Sciatic nerve (tissue), 2 donors: ENCODE measurements at regions of chr13 and their contacts with region 1.

Region 1: DNA sequence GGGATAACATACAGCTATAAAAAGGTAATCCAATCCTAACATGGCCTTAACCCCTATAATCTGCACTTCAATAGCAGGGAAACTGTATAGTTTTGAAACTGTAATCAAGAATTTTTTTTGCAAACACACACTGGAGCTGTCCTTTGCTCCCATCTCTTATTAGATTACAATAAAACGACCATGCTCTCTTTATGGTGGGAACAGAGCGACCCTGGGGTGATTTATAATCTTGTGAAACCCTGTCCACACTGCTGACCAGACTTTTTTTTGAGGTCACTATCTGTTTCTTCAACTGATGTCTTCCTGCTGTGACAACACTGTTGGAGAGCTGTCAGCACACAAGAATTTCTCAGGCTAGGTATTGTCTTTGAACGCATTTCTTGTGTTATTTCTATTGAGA is 35.3 kb downstream of the DACH1 start:
- DNase-seq: no peak
- ATAC-seq: no peak

Region 2: DNA sequence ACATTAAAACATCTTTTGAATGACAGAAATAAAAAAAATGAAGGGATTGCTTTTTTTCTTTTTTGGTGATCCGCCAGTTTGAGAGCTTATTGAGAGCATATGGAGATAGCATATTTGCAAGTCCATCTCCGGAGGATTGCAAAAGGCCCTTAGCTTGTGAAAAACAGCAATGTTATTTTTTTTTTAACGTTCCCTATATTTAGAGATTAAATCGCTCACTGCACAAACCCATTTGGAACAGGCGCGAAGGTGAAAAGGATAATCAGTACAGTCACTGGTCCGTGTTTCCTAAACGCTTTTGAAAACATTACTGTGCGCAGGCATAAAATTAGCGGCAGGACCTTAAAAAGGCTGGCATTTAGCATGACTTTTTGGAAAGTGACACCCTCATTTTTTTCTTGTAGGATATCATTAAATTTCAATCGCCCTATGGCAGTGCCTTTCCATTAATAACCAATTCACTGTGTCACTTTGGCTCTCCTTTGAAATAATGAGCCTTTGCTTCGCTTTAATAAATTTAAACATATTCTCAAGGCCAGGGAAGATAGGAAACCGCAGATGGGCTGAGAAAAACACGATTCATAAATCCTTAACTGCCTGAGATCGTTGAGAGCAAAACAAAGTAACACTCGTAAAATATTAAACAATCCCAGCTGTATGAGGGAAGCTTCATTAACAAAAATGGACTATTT is 307.0 kb before region 1 on chr13:
- intact Hi-C with region 1: loop called (anchors 5 kb)
- DNase-seq: no peak
- ATAC-seq: no peak